ENCODE measurements at regions of chr1 and their contacts with region 1.

Region 1: DNA sequence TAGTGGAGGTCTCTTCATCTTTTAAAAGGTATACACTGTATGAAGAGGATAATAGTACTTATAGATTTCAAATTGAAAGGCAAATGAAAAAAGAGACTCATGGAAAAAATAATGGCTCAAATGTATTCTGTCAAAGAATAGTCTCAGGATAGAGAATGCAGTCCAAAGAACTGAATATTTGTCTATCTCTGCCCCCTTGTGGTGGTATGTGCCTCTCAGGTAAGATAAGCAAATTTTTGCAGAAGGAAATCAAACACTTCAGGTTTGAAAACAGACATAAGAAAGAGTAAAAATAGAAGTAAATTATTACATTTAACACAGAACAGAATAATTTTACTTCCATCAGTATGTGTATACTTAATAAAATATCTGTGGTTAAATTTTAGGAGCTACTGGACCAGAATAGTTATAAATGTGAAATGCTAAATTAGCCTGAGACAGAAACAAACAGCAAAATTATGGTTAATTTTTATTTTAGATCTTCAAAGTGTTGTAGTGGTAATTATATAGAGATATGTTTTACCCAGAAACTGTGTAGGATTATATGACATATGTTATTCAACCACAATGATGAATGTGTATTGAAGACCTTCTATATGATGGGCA is 164.4 kb upstream of the PALMD start:
- DNase-seq: peak; percentile 30
- H3K4me3 ChIP-seq: no peak overlapping the region; a peak in 1 of 4 replicates
- H3K27ac ChIP-seq: peak overlapping the region in 1 of 2 experiments; percentile 77; a peak in 2 of 4 replicates
- H3K4me1 ChIP-seq: no peaks in the 10 kb centered on the region; a peak in 2 of 4 replicates
- H3K27me3 ChIP-seq: no peaks in the 10 kb centered on the region
- CTCF ChIP-seq: peak; percentile 92
- EP300 ChIP-seq: no peak
- RAD21 ChIP-seq: peak; percentile 98

Region 2: GRCh38 chr1:98749152-98749756 is 732.2 kb before region 1 on chr1:
- CTCF ChIA-PET with region 1: interaction called, 19 read pairs
- POLR2A ChIA-PET with region 1: no interaction called
- DNase-seq: no peak
- H3K4me3 ChIP-seq: no peak overlapping the region
- H3K27ac ChIP-seq: no peak overlapping the region
- H3K4me1 ChIP-seq: peaks cover 0 to 4% of the 10 kb centered on the region in 2 experiments; a peak in 2 of 4 replicates
- H3K27me3 ChIP-seq: no peaks in the 10 kb centered on the region
- CTCF ChIP-seq: peak; percentile 70
- EP300 ChIP-seq: no peak
- RAD21 ChIP-seq: peak; percentile 65

Region 3: GRCh38 chr1:99180343-99180808 is 301.1 kb before region 1 on chr1:
- CTCF ChIA-PET with region 1: interaction called, 127 read pairs
- POLR2A ChIA-PET with region 1: interaction called, 4 read pairs
- DNase-seq: peak; percentile 25
- H3K4me3 ChIP-seq: no peak overlapping the region
- H3K27ac ChIP-seq: peak overlapping the region; percentile 63 to 98; a peak in 3 of 4 replicates
- H3K4me1 ChIP-seq: peaks cover 11 to 26% of the 10 kb centered on the region in 2 experiments
- H3K27me3 ChIP-seq: no peaks in the 10 kb centered on the region
- CTCF ChIP-seq: peak; percentile 89
- EP300 ChIP-seq: no peak
- RAD21 ChIP-seq: peak; percentile 96

Region 4: GRCh38 chr1:99228153-99228552 is 253.3 kb before region 1 on chr1:
- CTCF ChIA-PET with region 1: interaction called, 17 read pairs
- POLR2A ChIA-PET with region 1: no interaction called
- DNase-seq: no peak
- H3K4me3 ChIP-seq: no peak overlapping the region
- H3K27ac ChIP-seq: peak overlapping the region in 1 of 2 experiments; percentile 92; a peak in 2 of 4 replicates
- H3K4me1 ChIP-seq: peaks cover 0 to 14% of the 10 kb centered on the region in 2 experiments; a peak in 2 of 4 replicates
- H3K27me3 ChIP-seq: no peaks in the 10 kb centered on the region
- CTCF ChIP-seq: no peak
- EP300 ChIP-seq: no peak
- RAD21 ChIP-seq: no peak

Region 5: DNA sequence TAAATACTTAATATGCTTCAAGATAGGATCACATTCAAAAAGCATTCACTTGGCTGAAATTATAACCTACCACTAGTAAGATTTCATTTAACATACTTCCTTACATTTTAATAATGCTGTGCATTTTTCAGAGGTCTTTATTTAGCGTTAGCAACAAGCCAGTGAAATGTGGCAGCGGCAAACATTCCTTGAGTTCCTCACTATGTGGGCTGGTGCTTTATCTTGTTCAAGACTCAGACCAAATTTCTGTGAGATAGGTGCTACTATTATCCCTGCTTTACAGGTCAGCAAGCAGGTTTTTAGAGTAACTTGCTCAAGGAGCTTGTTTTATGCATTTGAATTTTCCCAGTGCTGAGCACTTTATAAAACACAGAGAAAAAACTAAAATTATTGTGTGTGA is 84.5 kb before region 1 on chr1:
- CTCF ChIA-PET with region 1: no interaction called
- POLR2A ChIA-PET with region 1: no interaction called
- DNase-seq: no peak
- H3K4me3 ChIP-seq: no peak overlapping the region
- H3K27ac ChIP-seq: no peak overlapping the region
- H3K4me1 ChIP-seq: no peaks in the 10 kb centered on the region; a peak in 1 of 4 replicates
- H3K27me3 ChIP-seq: no peaks in the 10 kb centered on the region; the same call in 1 of the 2 replicates
- CTCF ChIP-seq: no peak
- EP300 ChIP-seq: no peak
- RAD21 ChIP-seq: no peak

Region 6: GRCh38 chr1:99469550-99469971 is 11.9 kb before region 1 on chr1:
- CTCF ChIA-PET with region 1: interaction called, 23 read pairs
- POLR2A ChIA-PET with region 1: no interaction called
- DNase-seq: no peak
- H3K4me3 ChIP-seq: no peak overlapping the region
- H3K27ac ChIP-seq: peak overlapping the region; percentile 45 to 64
- H3K4me1 ChIP-seq: peaks cover 8 to 15% of the 10 kb centered on the region in 2 experiments; a peak in 3 of 4 replicates
- H3K27me3 ChIP-seq: no peaks in the 10 kb centered on the region
- CTCF ChIP-seq: no peak
- EP300 ChIP-seq: 0 out of 4 replicates have a peak, but pooled peaks of 1 of the 2 experiments have one; percentile 52
- RAD21 ChIP-seq: no peak

Region 7: DNA sequence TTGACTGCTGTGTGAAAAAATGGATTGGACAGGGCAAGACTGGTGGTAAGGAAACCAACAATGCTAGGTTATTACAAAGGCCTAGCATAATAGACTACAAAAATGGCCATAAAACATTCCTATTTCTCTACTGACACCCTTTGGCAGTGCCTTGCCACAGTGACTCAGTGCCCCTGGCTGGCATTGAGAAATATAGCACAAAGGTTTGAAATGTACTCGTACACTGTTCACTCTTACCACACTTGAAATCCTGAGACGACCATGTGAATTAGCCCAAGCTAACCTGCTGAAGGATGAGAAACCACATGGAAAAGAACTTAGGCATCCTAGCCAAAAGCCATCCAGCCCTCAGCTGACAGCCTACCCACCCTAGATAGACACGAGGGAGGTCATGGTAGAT is 14.6 kb after region 1 on chr1:
- CTCF ChIA-PET with region 1: interaction called, 10 read pairs
- POLR2A ChIA-PET with region 1: no interaction called
- DNase-seq: no peak
- H3K4me3 ChIP-seq: no peak overlapping the region
- H3K27ac ChIP-seq: no peak overlapping the region
- H3K4me1 ChIP-seq: no peaks in the 10 kb centered on the region
- H3K27me3 ChIP-seq: no peaks in the 10 kb centered on the region
- CTCF ChIP-seq: no peak
- EP300 ChIP-seq: no peak
- RAD21 ChIP-seq: no peak

Region 8: GRCh38 chr1:99526926-99527477 is 45.5 kb after region 1 on chr1:
- CTCF ChIA-PET with region 1: interaction called, 18 read pairs
- POLR2A ChIA-PET with region 1: no interaction called
- DNase-seq: peak; percentile 8
- H3K4me3 ChIP-seq: no peak overlapping the region
- H3K27ac ChIP-seq: no peak overlapping the region; a peak in 1 of 4 replicates
- H3K4me1 ChIP-seq: peaks cover 0 to 3% of the 10 kb centered on the region in 2 experiments; a peak in 2 of 4 replicates
- H3K27me3 ChIP-seq: no peaks in the 10 kb centered on the region
- CTCF ChIP-seq: peak; percentile 58
- EP300 ChIP-seq: no peak
- RAD21 ChIP-seq: peak; percentile 68